ENCODE measurements at regions of chr15 and their contacts with region 1.

Region 1: DNA sequence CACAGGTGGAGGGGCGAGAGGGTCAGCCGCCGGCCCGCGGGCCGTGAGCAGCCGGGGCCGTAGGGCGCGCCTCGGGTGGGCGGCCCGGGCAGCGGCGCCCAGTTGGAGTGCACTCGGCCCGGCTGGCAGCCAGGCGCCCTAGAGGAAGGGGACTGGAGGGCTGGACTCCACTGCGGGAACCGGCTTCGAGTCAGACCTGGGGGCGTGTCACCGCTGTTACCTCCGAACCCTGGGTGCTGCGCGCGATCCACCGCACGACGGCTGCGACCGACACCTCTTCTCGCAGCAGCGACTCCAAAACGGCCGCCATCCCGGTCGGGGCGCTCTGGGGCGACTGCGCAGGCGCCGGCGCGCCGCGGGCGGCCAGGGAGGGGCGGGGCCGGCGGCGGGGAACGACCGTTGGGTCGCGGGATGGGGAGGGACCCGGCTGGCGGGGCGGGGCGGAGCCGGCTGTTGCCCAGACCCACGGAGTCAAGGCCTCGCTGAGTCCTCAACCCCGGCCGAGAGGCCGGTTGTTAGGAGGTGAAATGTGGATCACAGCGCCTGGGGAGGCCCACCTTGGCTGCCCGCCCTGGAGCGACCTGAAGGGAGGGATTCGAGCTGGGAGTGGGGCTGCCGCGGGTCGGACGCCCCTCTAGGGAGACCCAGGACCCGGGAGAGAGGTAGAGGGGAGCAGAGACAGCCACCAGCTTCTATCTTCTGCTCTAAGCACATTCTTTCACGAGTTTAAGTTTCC is at the start of gene CDAN1:
- DNase-seq: peak; percentile 44
- H3K4me3 ChIP-seq: peak within 1 kb of the TSS; percentile 93
- H3K27ac ChIP-seq: peak within 1 kb of the TSS; percentile 87
- H3K27me3 ChIP-seq: no peaks in the 10 kb centered on the region
- CTCF ChIP-seq: no peak
- polyA plus RNA-seq, gene CDAN1: 3.9 and 4.4 TPM in 2 replicates

Region 2: DNA sequence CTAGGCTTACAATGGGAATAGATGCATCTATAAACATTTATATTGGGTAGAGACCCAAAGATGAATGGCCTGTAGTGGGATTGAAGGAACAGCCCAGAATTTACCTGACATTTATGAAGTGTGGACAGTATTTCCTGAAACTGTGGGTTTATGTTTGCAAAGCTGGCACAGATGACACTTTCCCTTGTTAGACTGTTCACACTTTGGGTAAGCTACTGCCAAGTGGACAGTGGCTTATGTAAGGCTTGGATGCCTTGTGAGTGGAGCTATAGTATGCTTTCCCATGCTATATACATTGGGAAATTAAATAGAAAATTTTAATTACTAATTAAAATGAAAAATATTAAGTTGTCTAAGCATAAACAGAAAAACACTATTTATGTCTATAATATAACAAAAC is 113.0 kb before region 1 on chr15:
- CTCF ChIA-PET with region 1: no interaction called
- POLR2A ChIA-PET with region 1: no interaction called
- DNase-seq: no peak
- H3K4me3 ChIP-seq: no peak overlapping the region
- H3K27ac ChIP-seq: no peak overlapping the region
- H3K27me3 ChIP-seq: no peaks in the 10 kb centered on the region
- CTCF ChIP-seq: no peak

Region 3: GRCh38 chr15:42819786-42820185 is 82.8 kb after region 1 on chr15:
- CTCF ChIA-PET with region 1: no interaction called
- POLR2A ChIA-PET with region 1: no interaction called
- DNase-seq: no peak
- H3K4me3 ChIP-seq: no peak overlapping the region
- H3K27ac ChIP-seq: no peak overlapping the region
- H3K27me3 ChIP-seq: no peaks in the 10 kb centered on the region
- CTCF ChIP-seq: no peak

Region 4: DNA sequence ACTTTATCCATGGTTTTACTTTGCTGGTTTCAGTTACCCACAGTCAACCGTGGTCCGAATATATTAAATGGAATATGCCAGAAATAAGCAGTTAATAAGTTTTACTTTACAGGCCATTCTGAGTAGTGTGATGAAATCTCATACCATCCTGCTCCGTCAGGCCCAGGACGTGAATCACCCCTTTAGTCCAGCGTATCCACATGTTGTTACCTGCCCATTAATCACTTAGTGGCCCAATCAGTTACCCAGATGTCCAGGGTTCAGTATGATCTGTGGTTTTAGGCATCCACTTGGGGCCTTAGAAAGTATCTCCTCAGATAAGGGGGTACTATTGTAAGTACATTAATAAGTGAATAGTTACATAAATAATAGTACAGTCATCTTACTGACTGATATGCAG is 95.6 kb after region 1 on chr15:
- CTCF ChIA-PET with region 1: interaction called, 13 read pairs
- POLR2A ChIA-PET with region 1: no interaction called
- DNase-seq: peak; percentile 8
- H3K4me3 ChIP-seq: no peak overlapping the region
- H3K27ac ChIP-seq: no peak overlapping the region
- H3K27me3 ChIP-seq: no peaks in the 10 kb centered on the region
- CTCF ChIP-seq: no peak

Measured in AG04450 (cell line).